ENCODE measurements at regions of chr19 and their contacts with region 1.

Region 1: DNA sequence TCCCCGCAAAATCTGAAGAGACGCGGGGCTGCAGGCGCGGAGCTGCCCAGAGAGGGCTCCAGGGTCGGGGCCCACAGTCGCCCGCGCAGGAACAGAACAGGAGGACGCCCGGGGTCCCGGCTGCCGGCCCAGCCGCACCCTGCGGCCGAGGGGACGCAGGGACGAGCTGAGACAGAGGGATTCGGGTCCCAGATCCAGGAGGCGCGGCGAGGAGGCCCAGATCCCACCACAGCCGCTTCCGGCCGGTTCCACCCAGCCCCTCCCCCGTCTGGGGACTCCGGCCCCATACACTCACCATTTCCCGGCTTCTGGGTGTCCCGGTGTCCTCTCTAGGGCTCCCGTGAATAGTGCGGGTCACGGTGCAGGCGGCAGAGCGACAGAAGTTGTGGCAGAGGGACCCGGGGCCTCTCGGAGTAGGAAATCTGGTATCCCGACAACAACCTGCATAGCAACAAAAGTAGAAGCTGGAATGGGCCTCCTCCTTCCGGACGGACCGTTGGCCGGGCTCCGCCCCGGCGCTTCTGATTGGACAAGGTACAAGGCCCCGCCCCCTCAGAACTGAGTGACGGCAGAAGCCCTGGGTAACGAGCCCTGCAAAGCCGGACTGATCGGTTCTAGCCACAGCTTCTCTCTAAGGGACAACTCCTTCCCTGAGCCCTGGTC is at the start of gene ZNF20:
- DNase-seq: peak; percentile 99
- H3K4me3 ChIP-seq: peak within 1 kb of the TSS; percentile 67 to 88
- H3K27ac ChIP-seq: peak within 1 kb of the TSS; percentile 81 to 89
- H3K4me1 ChIP-seq: peaks cover 11% of the 10 kb centered on the region
- H3K27me3 ChIP-seq: no peaks in the 10 kb centered on the region
- CTCF ChIP-seq: peak in 1 of 4 experiments; percentile 6
- POLR2A ChIP-seq: peak; percentile 70
- total RNA-seq, gene ZNF20: 6.0 TPM in 1 of 2 donors, not detected in the other

Region 2: GRCh38 chr19:11798391-11799330 is 341.4 kb before region 1 on chr19 and contains the start of gene ZNF491:
- intact Hi-C with region 1: loop called (anchors 5 kb)
- DNase-seq: peak; percentile 91
- H3K4me3 ChIP-seq: peak within 1 kb of the TSS; percentile 53 to 69
- H3K27ac ChIP-seq: peak within 1 kb of the TSS; percentile 76 to 81
- H3K4me1 ChIP-seq: peaks cover 8% of the 10 kb centered on the region
- H3K27me3 ChIP-seq: no peaks in the 10 kb centered on the region
- CTCF ChIP-seq: peak in 3 of 4 experiments; percentile 7 to 54 (median 21)
- POLR2A ChIP-seq: peak; percentile 86
- total RNA-seq, gene ZNF491: 1.6 to 2.3 TPM

Region 3: GRCh38 chr19:11881151-11881800 is 258.7 kb before region 1 on chr19:
- intact Hi-C with region 1: loop called (anchors 5 kb)
- DNase-seq: peak; percentile 49
- H3K4me3 ChIP-seq: no peak overlapping the region
- H3K27ac ChIP-seq: no peak overlapping the region
- H3K4me1 ChIP-seq: no peaks in the 10 kb centered on the region
- H3K27me3 ChIP-seq: no peaks in the 10 kb centered on the region
- CTCF ChIP-seq: peak in 3 of 4 experiments; percentile 59 to 73 (median 63)
- POLR2A ChIP-seq: no peak

Region 4: DNA sequence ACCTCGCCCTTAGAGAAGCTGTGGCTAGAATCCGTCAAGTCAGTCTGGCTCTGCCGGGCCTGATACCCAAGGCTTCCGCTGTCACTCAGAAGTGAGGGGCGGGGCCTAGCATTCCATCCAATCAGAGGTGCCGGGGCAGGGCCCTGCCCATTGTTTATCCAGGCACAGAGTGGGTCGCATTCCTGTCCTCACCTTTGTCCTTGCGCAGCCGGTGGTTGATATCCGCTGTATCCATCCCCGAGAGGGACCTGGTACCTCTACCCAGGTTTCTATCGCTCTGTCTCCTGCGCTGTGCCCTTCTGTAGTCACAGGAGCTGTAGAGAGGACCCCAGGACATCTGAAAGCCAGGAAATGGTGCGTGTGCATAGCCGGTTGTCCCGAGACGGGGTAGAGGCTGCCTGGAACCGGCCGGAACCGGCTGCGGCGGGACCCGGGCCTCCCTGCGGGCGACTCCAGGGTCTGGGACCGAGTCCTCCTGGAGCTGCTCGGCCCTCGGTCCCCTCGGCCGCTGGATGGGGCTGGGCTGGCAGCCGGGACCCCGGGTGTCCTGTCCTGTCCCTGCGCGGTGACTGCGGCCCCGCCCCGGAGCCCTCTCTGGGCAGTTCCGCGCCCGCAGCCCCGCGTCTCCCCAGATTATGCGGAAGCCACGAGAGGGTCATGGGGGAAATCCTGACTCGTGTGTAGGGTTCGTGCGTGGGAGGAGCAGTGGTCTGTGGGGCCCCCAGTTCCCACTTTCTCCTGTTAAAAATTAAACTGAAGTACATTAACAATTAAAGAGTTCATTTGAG is 175.0 kb before region 1 on chr19 and contains the start of gene ZNF763:
- intact Hi-C with region 1: loop called (anchors 10 kb)
- DNase-seq: peak; percentile 95
- H3K4me3 ChIP-seq: peak within 1 kb of the TSS; percentile 69 to 71
- H3K27ac ChIP-seq: peak within 1 kb of the TSS; percentile 95 to 97
- H3K4me1 ChIP-seq: no peaks in the 10 kb centered on the region
- H3K27me3 ChIP-seq: no peaks in the 10 kb centered on the region
- CTCF ChIP-seq: no peak
- POLR2A ChIP-seq: peak; percentile 63
- total RNA-seq, gene ZNF763: 4.0 to 5.6 TPM

Region 5: DNA sequence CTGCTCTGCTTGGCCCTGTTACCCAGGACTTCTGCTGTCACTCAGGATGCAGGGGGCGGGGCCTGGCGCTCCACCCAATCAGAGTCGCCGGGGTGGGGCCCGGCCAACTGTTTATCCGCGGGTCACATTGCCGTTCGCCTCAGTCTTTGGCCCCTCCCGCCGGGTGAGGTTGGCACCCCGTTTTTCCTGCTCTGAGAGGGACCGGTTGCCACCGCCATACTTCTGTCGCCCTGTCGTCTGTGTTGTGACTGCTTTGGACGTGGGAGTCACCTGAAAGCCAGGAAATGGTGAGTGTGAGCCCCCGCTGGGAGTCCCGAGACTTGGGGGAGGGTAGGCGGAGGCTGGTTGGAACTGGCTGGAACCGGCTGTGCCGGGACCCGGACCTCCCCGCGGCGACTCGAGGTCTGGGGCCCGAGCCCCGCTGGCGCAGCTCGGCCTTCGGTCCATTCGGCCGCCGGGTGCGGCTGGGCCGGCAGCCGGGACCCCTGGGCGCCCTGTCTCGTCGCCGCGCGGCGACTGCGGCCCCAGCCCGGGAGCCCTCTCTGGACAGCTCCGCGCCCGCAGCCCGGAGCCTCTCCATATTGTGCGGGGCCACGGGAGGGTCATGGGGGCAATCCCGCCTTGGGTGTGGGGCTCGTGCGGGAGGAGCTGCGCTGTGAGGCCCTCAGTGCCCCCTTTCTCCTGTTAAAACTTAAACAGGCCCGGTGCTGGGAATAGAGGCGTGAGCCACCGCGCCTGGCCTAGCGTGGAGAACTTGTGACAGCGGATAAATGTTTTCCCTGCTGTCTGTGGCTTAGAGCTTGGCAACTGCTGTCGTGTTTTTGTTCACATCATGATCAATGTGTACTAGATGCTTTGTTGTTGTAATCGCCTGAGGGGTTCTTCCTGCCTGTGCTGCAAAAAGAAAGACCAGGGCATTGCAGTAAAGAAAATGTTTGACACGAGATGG is 75.2 kb before region 1 on chr19 and contains the start of gene ZNF844:
- intact Hi-C with region 1: loop called (anchors 1 kb)
- DNase-seq: peak; percentile 97
- H3K4me3 ChIP-seq: peak within 1 kb of the TSS; percentile 90 to 91
- H3K27ac ChIP-seq: peak within 1 kb of the TSS; percentile 91 to 93
- H3K4me1 ChIP-seq: peaks cover 4% of the 10 kb centered on the region
- H3K27me3 ChIP-seq: no peaks in the 10 kb centered on the region
- CTCF ChIP-seq: peak in 1 of 4 experiments; percentile 25
- POLR2A ChIP-seq: peak; percentile 96
- total RNA-seq, gene ZNF844: 13.4 to 16.2 TPM

Region 6: GRCh38 chr19:12090807-12091206 is 49.2 kb before region 1 on chr19:
- intact Hi-C with region 1: loop called (anchors 2 kb)
- DNase-seq: peak; percentile 35
- H3K4me3 ChIP-seq: no peak overlapping the region
- H3K27ac ChIP-seq: no peak overlapping the region
- H3K4me1 ChIP-seq: no peaks in the 10 kb centered on the region
- H3K27me3 ChIP-seq: no peaks in the 10 kb centered on the region
- CTCF ChIP-seq: peak in 3 of 4 experiments; percentile 39 to 60 (median 55)
- POLR2A ChIP-seq: no peak

Region 7: DNA sequence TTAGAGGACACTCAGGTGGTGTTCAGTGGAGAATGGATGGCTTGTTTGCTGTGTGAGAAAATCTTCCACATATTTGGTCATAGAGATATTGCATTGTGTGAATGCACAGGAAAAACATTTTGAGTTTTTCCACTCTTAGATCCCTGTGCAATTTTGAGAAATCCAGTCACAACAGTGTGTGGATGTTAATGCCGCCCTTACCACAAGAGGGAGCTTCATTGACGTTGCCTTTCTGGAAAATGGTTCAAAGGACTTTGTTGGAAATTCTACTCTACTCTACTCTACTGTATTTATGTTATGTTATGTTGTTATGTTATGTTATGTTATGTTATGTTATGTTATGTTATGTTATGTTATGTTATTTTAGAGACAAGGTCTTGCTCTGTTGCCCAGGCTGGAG is 13.3 kb before region 1 on chr19:
- intact Hi-C with region 1: no loop called
- DNase-seq: no peak
- H3K4me3 ChIP-seq: no peak overlapping the region
- H3K27ac ChIP-seq: no peak overlapping the region
- H3K4me1 ChIP-seq: no peaks in the 10 kb centered on the region
- H3K27me3 ChIP-seq: no peaks in the 10 kb centered on the region
- CTCF ChIP-seq: peak in 3 of 4 experiments; percentile 25 to 44 (median 43)
- POLR2A ChIP-seq: no peak

Region 8: DNA sequence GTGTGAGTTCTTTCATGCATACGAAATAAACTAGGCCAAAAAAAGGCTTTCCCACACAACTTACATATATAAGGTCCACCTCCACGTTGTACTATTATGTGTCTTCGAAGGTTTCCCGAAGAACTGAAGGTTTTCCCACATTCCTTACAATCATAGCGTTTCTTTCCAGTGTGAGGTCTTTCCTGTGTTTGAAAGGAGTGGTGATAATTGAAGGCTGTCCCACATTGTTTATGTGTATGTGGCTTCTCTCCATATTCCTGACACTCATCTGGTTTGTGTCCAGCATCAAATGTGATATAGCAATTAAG is 210.8 kb after region 1 on chr19:
- intact Hi-C with region 1: no loop called
- DNase-seq: no peak
- H3K4me3 ChIP-seq: no peak overlapping the region
- H3K27ac ChIP-seq: no peak overlapping the region
- H3K4me1 ChIP-seq: no peaks in the 10 kb centered on the region
- H3K27me3 ChIP-seq: no peaks in the 10 kb centered on the region
- CTCF ChIP-seq: no peak
- POLR2A ChIP-seq: no peak

Measured in prostate gland (tissue), 2 donors.